CD4-positive, alpha-beta memory T cell (primary cell): ENCODE measurements at regions of chr12 and their contacts with region 1.

Region 1: GRCh38 chr12:7319930-7320329 is 16.1 kb downstream of the ACSM4 start:
- DNase-seq: peak in 1 of 5 donors; percentile 8
- H3K4me3 ChIP-seq: no peak overlapping the region
- H3K4me3 Mint-ChIP-seq: no peak overlapping the region
- H3K27ac ChIP-seq: no peak overlapping the region
- H3K27ac Mint-ChIP-seq: peak overlapping the region in 1 of 7 donors; percentile 11
- H3K4me1 ChIP-seq: no peaks in the 10 kb centered on the region
- H3K4me1 Mint-ChIP-seq: no peaks in the 10 kb centered on the region
- H3K27me3 ChIP-seq: no peaks in the 10 kb centered on the region
- H3K27me3 Mint-ChIP-seq: no peaks in the 10 kb centered on the region

Region 2: GRCh38 chr12:7460375-7461259 is 140.7 kb after region 1 on chr12:
- CTCF ChIA-PET with region 1: interaction called, 17 read pairs
- POLR2A ChIA-PET with region 1: no interaction called
- intact Hi-C with region 1: loop called (anchors 1 kb)
- DNase-seq: peak; percentile 45 to 53 (median 50)
- H3K4me3 ChIP-seq: no peak overlapping the region
- H3K4me3 Mint-ChIP-seq: no peak overlapping the region
- H3K27ac ChIP-seq: no peak overlapping the region
- H3K27ac Mint-ChIP-seq: no peak overlapping the region
- H3K4me1 ChIP-seq: no peaks in the 10 kb centered on the region
- H3K4me1 Mint-ChIP-seq: no peaks in the 10 kb centered on the region
- H3K27me3 ChIP-seq: no peaks in the 10 kb centered on the region
- H3K27me3 Mint-ChIP-seq: peaks cover 3% of the 10 kb centered on the region in 2 donors